K562 (cell line): ENCODE measurements at regions of chr9 and their contacts with region 1.

Region 1: DNA sequence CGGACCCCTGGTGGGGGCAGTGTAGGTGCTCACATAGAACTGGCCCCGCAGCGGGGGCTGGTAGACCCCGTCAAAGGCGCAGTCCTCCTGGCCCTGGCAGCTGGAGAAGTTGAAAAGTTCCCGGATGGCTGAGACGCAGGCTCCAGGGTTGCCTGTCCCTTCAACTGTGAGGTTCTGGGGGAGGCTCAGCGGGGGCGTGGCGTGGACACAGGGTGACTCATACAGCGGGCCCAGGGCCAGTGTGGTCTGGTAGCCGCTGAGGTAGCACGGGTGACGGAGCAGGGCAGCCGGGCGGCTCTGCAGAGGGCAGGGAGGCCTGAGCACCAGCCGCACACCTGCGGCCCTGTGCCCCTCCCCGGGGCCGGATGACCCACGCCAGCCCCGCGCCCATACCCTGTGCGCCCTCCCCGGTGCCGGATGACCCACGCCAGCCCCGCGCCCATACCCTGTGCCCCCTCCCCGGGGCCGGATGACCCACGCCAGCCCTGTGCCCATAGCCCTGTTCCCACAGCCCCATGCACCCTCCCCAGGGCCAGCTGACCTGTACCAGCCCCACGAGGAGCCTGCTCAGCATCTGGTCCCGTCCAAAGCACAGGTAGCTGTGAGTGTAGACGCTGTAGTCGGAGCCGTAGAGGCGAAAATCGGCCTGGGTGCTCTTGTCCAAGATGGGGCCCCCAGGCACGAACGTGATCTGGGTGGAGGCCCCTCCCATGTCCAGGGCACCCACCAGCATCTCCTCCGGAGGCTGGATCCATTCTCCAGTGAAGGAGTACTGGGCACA is 5.0 kb downstream of the ENTPD8 start:
- DNase-seq: peak; percentile 88 to 94 (median 91)
- ATAC-seq: peak; percentile 96
- H3K4me3 ChIP-seq: no peak overlapping the region; the same call in 1 of the 2 replicates
- H3K27ac ChIP-seq: peak overlapping the region; percentile 78; the same call in 2 of the 3 replicates
- H3K4me1 ChIP-seq: peaks cover 14 to 79% of the 10 kb centered on the region in 2 experiments; a peak in 4 of 5 replicates
- H3K27me3 ChIP-seq: no peaks in the 10 kb centered on the region
- CTCF ChIP-seq: no peak
- EP300 ChIP-seq: no peak
- POLR2A ChIP-seq: peak; percentile 44; the same call in 1 of the 2 replicates
- RAD21 ChIP-seq: no peak

Region 2: GRCh38 chr9:137423004-137423874 is 12.9 kb before region 1 on chr9 and contains the starts of genes EXD3 and NOXA1:
- CTCF ChIA-PET with region 1: no interaction called
- POLR2A ChIA-PET with region 1: interaction called, 21 read pairs
- in situ Hi-C with region 1: no loop called
- intact Hi-C with region 1: no loop called
- DNase-seq: peak; percentile 96 to 98 (median 98)
- ATAC-seq: peak; percentile 87
- H3K4me3 ChIP-seq: peak within 1 kb of the TSS; percentile 97
- H3K27ac ChIP-seq: peak within 1 kb of the TSS; percentile 72
- H3K4me1 ChIP-seq: peaks cover 35 to 50% of the 10 kb centered on the region in 2 experiments
- H3K27me3 ChIP-seq: no peaks in the 10 kb centered on the region
- CTCF ChIP-seq: peak; percentile 51 to 84 (median 77)
- EP300 ChIP-seq: 0 out of 2 replicates have a peak, but pooled peaks have one; percentile 3
- POLR2A ChIP-seq: no peak
- RAD21 ChIP-seq: peak; percentile 50 to 60
- polyA plus RNA-seq, gene EXD3: 0.29 to 0.35 TPM
- polyA plus RNA-seq, gene NOXA1: not detected

Region 3: GRCh38 chr9:137907776-137908175 is 471.6 kb after region 1 on chr9:
- CTCF ChIA-PET with region 1: no interaction called
- POLR2A ChIA-PET with region 1: no interaction called
- in situ Hi-C with region 1: no loop called
- intact Hi-C with region 1: no loop called
- DNase-seq: no peak
- ATAC-seq: no peak
- H3K4me3 ChIP-seq: no peak overlapping the region
- H3K27ac ChIP-seq: no peak overlapping the region
- H3K4me1 ChIP-seq: no peaks in the 10 kb centered on the region
- H3K27me3 ChIP-seq: peaks cover 19 to 52% of the 10 kb centered on the region in 2 experiments
- CTCF ChIP-seq: no peak
- EP300 ChIP-seq: no peak
- POLR2A ChIP-seq: no peak
- RAD21 ChIP-seq: no peak